ENCODE measurements at regions of chr1 and their contacts with region 1.

Region 1: GRCh38 chr1:164611754-164612642 is 53.0 kb downstream of the PBX1 start:
- DNase-seq: peak in 1 of 2 donors; percentile 71
- H3K4me3 ChIP-seq: peak overlapping the region in 1 of 2 donors; percentile 53
- H3K27ac ChIP-seq: peak overlapping the region; percentile 82 to 83
- H3K4me1 ChIP-seq: peaks cover 8 to 49% of the 10 kb centered on the region in 2 donors
- H3K27me3 ChIP-seq: no peaks in the 10 kb centered on the region
- CTCF ChIP-seq: no peak

Region 2: GRCh38 chr1:164576291-164577271 is 35.4 kb before region 1 on chr1:
- intact Hi-C with region 1: loop called (anchors 5 kb)
- DNase-seq: peak in 1 of 2 donors; percentile 69
- H3K4me3 ChIP-seq: peak overlapping the region; percentile 47 to 67
- H3K27ac ChIP-seq: peak overlapping the region; percentile 74 to 84
- H3K4me1 ChIP-seq: peaks cover 0 to 52% of the 10 kb centered on the region in 2 donors
- H3K27me3 ChIP-seq: no peaks in the 10 kb centered on the region
- CTCF ChIP-seq: peak in 1 of 3 experiments; percentile 25

Region 3: GRCh38 chr1:164637461-164638375 is 25.7 kb after region 1 on chr1:
- intact Hi-C with region 1: loop called (anchors 2 kb)
- DNase-seq: peak in 1 of 2 donors; percentile 81
- H3K4me3 ChIP-seq: no peak overlapping the region
- H3K27ac ChIP-seq: peak overlapping the region; percentile 34 to 60
- H3K4me1 ChIP-seq: peaks cover 0 to 42% of the 10 kb centered on the region in 2 donors
- H3K27me3 ChIP-seq: no peaks in the 10 kb centered on the region
- CTCF ChIP-seq: no peak

Region 4: DNA sequence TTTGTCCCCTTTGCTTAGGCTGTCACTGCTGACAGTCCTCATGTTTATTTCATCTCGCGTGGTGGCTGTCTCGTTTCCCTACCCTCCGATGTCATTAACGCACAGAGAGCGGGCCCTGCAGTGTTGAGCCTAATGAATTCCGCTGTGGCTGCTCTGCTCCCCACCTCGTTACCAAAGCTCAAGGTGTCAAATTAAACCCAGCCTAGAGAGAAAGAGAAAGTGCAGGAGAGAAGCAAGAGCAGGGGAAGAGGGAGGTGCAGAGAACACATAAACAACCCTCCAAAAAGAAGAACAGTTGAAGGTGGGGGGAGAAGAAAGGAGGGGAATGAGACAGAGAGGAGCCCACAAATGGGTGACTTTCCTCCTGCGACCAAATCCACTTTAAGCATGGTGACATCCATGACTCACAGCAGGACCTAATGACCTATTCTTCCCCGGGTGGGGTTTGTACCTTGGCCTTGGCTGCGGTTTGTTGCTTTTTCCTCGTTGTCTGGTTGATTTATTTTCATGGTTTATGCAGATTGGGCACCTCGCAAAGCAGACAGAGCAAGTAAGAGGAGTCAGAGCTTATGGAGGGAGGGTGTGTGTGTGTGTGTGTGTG is 39.5 kb after region 1 on chr1:
- intact Hi-C with region 1: no loop called
- DNase-seq: no peak
- H3K4me3 ChIP-seq: no peak overlapping the region
- H3K27ac ChIP-seq: no peak overlapping the region
- H3K4me1 ChIP-seq: peaks cover 0 to 12% of the 10 kb centered on the region in 2 donors
- H3K27me3 ChIP-seq: no peaks in the 10 kb centered on the region
- CTCF ChIP-seq: no peak

Region 5: DNA sequence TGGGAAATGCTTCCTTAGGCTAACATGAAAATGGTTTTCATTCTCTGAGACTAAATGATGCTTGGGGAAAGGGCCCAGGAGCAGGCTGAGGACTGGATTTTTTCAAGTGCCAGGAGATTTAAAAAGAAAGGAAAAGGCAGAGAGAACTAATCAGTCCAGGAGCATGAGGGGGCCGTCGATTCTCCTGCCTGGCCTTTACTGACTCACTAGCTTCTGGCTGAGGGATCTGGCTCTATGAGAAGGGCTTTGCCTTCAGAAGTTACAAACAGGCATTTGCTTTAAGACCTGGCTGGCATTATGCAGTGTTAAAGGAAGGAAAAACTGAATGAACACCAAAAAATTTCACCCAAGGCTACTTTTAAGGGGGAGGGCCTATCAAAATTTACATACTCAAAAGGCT is 306.1 kb after region 1 on chr1:
- intact Hi-C with region 1: loop called (anchors 5 kb)
- DNase-seq: no peak
- H3K4me3 ChIP-seq: no peak overlapping the region
- H3K27ac ChIP-seq: no peak overlapping the region
- H3K4me1 ChIP-seq: no peaks in the 10 kb centered on the region
- H3K27me3 ChIP-seq: no peaks in the 10 kb centered on the region
- CTCF ChIP-seq: no peak

Measured in ascending aorta (tissue), 2 donors.